Caco-2 (cell line): ENCODE measurements at regions of chr15 and their contacts with region 1.

Region 1: DNA sequence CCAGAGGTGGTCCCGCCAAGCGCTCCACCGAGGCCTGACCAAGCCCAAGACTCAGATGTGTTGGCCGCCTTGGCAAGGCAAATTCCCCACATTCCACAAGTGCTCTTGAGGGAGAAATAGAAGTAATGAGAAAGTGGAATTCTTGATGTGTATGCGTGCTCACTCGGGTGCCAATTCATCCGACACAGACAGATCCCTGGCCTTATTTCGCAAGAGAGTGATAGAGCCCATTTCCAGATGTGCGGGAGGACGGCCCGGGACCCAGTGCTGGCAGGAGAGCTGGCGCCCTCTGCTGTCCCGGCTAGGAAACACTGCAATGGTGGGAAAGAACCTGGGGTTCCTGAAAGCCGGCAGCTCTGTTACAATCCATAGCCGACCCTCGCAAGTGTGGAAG is 76.0 kb downstream of the HMG20A start:
- DNase-seq: peak; percentile 79 to 82
- H3K4me3 ChIP-seq: no peak overlapping the region
- H3K4me3 Mint-ChIP-seq: no peak overlapping the region
- H3K27ac Mint-ChIP-seq: no peak overlapping the region
- H3K4me1 ChIP-seq: no peaks in the 10 kb centered on the region
- H3K4me1 Mint-ChIP-seq: peaks cover 15% of the 10 kb centered on the region
- H3K27me3 ChIP-seq: no peaks in the 10 kb centered on the region
- H3K27me3 Mint-ChIP-seq: no peaks in the 10 kb centered on the region
- CTCF ChIP-seq: peak; percentile 83 to 90

Region 2: DNA sequence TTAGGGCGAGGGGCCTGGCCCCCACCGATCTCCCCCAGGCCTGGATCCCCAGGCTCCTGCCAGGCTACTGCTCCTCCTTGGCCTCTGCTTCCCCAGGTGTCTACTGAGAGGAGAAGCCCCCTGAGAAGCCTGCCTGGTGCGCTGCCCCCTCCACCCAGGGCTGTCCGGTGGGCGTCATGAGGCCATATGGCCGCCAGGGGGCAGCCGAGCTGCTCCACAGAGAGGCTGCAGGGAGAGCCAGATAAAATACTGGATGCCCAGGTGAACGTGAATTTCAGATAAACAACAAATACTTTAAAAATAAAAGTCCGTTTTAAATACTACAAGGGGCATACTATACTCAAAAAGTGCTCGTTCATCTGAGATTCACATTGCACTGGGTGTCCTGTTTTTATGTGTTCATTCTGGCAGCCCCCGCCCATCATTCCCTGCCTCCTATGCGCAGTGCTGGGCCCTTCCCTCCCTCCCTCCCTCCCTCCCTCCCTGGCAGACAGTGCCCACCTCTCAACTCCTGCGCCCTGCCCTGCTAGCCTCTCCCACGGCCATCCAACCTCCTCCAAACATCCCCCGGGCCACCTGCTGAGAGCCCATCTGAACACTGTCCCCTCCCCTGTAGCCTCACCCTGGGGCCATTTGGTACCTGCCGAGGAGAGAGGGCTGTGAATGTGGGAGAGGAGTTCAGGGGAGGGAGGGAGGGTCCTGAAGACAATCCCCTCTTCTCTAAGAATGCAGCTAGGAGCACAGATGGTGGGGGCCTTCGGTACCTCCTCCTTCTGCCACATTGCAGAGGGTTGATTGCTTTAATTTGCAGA is 472.2 kb before region 1 on chr15:
- CTCF ChIA-PET with region 1: no interaction called
- POLR2A ChIA-PET with region 1: no interaction called
- intact Hi-C with region 1: loop called (anchors 2 kb)
- DNase-seq: peak; percentile 48 to 82
- H3K4me3 ChIP-seq: no peak overlapping the region
- H3K4me3 Mint-ChIP-seq: no peak overlapping the region
- H3K27ac Mint-ChIP-seq: no peak overlapping the region
- H3K4me1 ChIP-seq: no peaks in the 10 kb centered on the region
- H3K4me1 Mint-ChIP-seq: no peaks in the 10 kb centered on the region
- H3K27me3 ChIP-seq: no peaks in the 10 kb centered on the region
- H3K27me3 Mint-ChIP-seq: no peaks in the 10 kb centered on the region
- CTCF ChIP-seq: peak; percentile 93 to 96

Region 3: GRCh38 chr15:77094397-77095030 is 402.2 kb before region 1 on chr15:
- CTCF ChIA-PET with region 1: no interaction called
- POLR2A ChIA-PET with region 1: no interaction called
- intact Hi-C with region 1: no loop called
- DNase-seq: no peak
- H3K4me3 ChIP-seq: no peak overlapping the region
- H3K4me3 Mint-ChIP-seq: no peak overlapping the region
- H3K27ac Mint-ChIP-seq: no peak overlapping the region
- H3K4me1 ChIP-seq: no peaks in the 10 kb centered on the region
- H3K4me1 Mint-ChIP-seq: peaks cover 2% of the 10 kb centered on the region
- H3K27me3 ChIP-seq: no peaks in the 10 kb centered on the region
- H3K27me3 Mint-ChIP-seq: no peaks in the 10 kb centered on the region
- CTCF ChIP-seq: peak in 1 of 2 experiments; percentile 29

Region 4: GRCh38 chr15:77118882-77119321 is 377.8 kb before region 1 on chr15:
- CTCF ChIA-PET with region 1: interaction called, 6 read pairs
- POLR2A ChIA-PET with region 1: no interaction called
- intact Hi-C with region 1: loop called (anchors 1 kb)
- DNase-seq: peak in 1 of 2 experiments; percentile 51
- H3K4me3 ChIP-seq: no peak overlapping the region
- H3K4me3 Mint-ChIP-seq: no peak overlapping the region
- H3K27ac Mint-ChIP-seq: no peak overlapping the region
- H3K4me1 ChIP-seq: no peaks in the 10 kb centered on the region
- H3K4me1 Mint-ChIP-seq: no peaks in the 10 kb centered on the region
- H3K27me3 ChIP-seq: no peaks in the 10 kb centered on the region
- H3K27me3 Mint-ChIP-seq: no peaks in the 10 kb centered on the region
- CTCF ChIP-seq: peak; percentile 53 to 78

Region 5: DNA sequence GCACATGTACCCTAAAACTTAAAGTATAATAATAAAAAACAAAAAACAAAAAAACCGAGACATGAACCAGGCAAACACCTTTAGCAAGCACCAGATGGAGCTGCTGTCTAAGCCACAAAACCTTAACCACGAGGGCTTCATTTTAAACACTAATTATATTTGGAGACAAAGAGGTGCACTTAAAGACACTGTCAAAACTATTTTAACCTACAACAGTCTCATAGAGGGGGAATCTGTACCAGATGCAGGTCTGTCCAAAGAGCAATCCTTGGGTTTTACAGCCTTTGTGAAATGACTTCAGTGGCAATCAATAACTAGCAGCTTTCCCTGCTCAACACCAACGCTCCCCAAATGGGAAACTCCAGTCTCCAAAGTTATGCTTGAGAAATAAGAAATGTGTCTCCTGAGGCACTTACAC is 310.1 kb before region 1 on chr15:
- CTCF ChIA-PET with region 1: interaction called, 7 read pairs
- POLR2A ChIA-PET with region 1: no interaction called
- intact Hi-C with region 1: loop called (anchors 1 kb)
- DNase-seq: no peak
- H3K4me3 ChIP-seq: no peak overlapping the region
- H3K4me3 Mint-ChIP-seq: no peak overlapping the region
- H3K27ac Mint-ChIP-seq: peak overlapping the region; percentile 25
- H3K4me1 ChIP-seq: peaks cover 28% of the 10 kb centered on the region
- H3K4me1 Mint-ChIP-seq: peaks cover 14% of the 10 kb centered on the region
- H3K27me3 ChIP-seq: no peaks in the 10 kb centered on the region
- H3K27me3 Mint-ChIP-seq: no peaks in the 10 kb centered on the region
- CTCF ChIP-seq: peak; percentile 43 to 44

Region 6: DNA sequence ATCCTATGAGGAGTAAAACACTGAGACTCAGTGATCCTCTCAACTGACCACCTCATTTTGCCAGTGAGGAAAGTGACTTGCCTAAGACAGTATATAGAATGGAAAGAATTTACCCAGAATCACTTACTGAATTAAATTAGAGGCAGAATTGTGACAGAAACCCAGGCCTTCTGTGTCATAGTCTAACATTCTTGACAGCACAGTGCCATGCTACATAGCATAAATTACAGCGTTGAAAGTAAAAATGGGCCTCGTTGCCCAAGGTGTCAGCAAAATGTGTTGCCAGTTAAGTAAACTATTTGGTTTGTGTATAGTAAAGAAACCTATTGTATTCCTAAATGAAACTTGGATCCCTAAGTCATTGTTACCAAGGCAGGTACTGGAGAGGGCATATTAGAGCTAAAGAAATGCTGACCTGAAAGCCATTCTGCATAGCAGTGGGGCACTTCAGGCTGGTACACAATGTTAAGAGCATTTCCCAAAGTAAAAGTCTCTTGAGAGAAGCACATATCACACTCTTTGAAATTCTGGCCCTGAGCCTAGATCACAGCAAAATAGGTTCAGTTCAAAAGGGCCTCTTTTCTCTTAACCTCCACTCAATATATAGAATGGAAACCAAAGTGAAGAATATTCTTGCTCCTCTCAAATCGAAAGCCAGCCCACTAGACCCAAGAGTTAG is 22.3 kb before region 1 on chr15:
- CTCF ChIA-PET with region 1: no interaction called
- POLR2A ChIA-PET with region 1: no interaction called
- intact Hi-C with region 1: no loop called
- DNase-seq: no peak
- H3K4me3 ChIP-seq: no peak overlapping the region
- H3K4me3 Mint-ChIP-seq: no peak overlapping the region
- H3K27ac Mint-ChIP-seq: no peak overlapping the region
- H3K4me1 ChIP-seq: no peaks in the 10 kb centered on the region
- H3K4me1 Mint-ChIP-seq: no peaks in the 10 kb centered on the region
- H3K27me3 ChIP-seq: no peaks in the 10 kb centered on the region
- H3K27me3 Mint-ChIP-seq: no peaks in the 10 kb centered on the region
- CTCF ChIP-seq: no peak